ENCODE measurements at regions of chrX and their contacts with region 1.

Region 1: DNA sequence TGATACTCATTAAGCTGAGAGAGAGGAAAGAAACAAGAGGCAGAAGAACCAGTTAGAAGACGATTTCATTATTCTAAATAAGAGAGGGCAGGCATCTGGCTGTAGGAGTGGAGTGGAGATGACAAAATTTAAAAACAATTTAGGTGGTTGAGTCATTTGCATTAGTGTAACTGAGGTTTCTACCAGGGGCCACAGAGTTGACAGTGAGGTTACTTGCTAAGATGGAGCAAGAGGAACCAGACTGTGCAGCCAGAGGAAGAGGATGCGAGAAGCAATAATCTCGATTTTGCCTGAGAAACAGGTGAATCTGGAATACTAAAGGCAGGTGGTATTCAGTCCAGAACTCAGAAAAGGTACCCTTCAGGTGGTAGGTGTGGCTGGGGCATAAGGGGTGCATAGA is 491.9 kb downstream of the MID1IP1 start:
- DNase-seq: no peak

Region 2: DNA sequence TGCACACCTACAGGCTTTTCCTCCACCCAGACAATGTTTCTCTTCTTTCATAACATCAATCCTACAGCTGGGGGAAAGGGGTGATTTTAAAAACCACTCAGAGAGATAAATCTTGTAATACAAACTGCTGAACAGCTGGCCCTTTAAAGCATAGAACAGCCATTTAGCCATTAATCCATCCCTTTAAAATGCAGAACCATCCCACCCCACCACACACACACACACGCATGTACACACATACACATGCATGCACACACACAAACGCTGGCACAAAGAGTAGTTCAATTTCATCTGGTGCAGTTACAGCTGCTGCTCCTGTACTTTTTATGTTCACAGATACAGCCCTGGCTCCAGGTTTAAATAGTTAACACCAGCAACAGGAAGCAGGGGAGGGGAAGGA is 65.8 kb before region 1 on chrX:
- intact Hi-C with region 1: no loop called
- DNase-seq: no peak

Region 3: GRCh38 chrX:39309018-39309635 is 15.9 kb after region 1 on chrX:
- intact Hi-C with region 1: no loop called
- DNase-seq: no peak

Region 4: GRCh38 chrX:39367416-39367815 is 74.2 kb after region 1 on chrX:
- intact Hi-C with region 1: loop called in 1 of 2 experiments (anchors 2 kb)
- DNase-seq: no peak

Measured in posterior vena cava (tissue), 2 donors.